PC-3 (cell line): ENCODE measurements at regions of chr6 and their contacts with region 1.

Region 1: GRCh38 chr6:43013843-43014433 is at the starts of genes KLHDC3 and MEA1:
- DNase-seq: peak; percentile 99
- ATAC-seq: peak; percentile 92
- H3K4me3 ChIP-seq: peak within 1 kb of the TSS; percentile 91
- H3K27ac ChIP-seq: peak within 1 kb of the TSS; percentile 17; the same call in 1 of the 2 replicates
- H3K4me1 ChIP-seq: peaks cover 23% of the 10 kb centered on the region
- H3K27me3 ChIP-seq: no peaks in the 10 kb centered on the region
- CTCF ChIP-seq: no peak
- total RNA-seq, gene KLHDC3: 68.9 and 76.0 TPM in 2 replicates
- total RNA-seq, gene MEA1: 131 and 146 TPM in 2 replicates

Region 2: GRCh38 chr6:42901536-42901957 is 112.4 kb before region 1 on chr6:
- CTCF ChIA-PET with region 1: no interaction called
- POLR2A ChIA-PET with region 1: no interaction called
- intact Hi-C with region 1: loop called (anchors 1 kb)
- DNase-seq: peak; percentile 96
- ATAC-seq: peak; percentile 96
- H3K4me3 ChIP-seq: peak overlapping the region; percentile 55
- H3K27ac ChIP-seq: no peak overlapping the region
- H3K4me1 ChIP-seq: peaks cover 16% of the 10 kb centered on the region
- H3K27me3 ChIP-seq: no peaks in the 10 kb centered on the region
- CTCF ChIP-seq: peak; percentile 89

Region 3: DNA sequence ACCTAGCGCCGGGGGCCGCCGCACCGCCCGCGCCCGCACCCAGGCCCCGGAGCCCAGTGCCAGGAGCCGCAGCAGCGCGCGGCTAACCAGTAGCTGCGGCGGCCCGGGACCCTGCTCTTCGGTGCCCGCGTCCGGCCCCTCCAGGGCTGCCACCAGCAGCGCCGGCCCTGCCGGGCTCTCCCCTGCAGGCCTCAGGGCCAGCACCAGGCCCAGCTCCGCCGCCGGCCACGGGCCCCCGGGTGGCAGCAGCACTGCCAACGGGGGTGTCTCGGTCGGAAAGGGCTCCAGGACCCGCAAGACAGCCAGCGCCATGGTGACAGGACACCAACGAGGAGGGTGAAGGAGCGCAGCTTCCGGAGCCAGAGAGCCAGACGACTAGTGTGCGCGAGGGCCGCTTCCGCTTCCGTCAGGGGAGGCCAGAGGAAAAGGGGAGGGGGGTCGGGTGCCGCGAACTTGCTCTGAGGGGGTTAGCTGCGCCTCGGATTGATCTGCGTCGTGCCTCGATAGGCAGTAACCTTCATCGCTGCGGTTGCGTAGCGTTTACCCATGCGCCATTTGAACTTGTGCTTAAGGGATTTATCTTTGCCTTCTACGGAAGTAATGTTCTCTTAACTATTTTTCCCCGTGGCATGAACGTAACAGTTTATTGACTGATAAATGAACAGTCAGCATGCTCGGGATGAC is 35.0 kb before region 1 on chr6 and contains the start of gene PEX6:
- CTCF ChIA-PET with region 1: no interaction called
- POLR2A ChIA-PET with region 1: interaction called, 11 read pairs
- intact Hi-C with region 1: loop called (anchors 2 kb)
- DNase-seq: peak; percentile 89
- ATAC-seq: peak; percentile 85
- H3K4me3 ChIP-seq: peak within 1 kb of the TSS; percentile 93
- H3K27ac ChIP-seq: peak within 1 kb of the TSS; percentile 65
- H3K4me1 ChIP-seq: peaks cover 18% of the 10 kb centered on the region
- H3K27me3 ChIP-seq: no peaks in the 10 kb centered on the region
- CTCF ChIP-seq: no peak
- total RNA-seq, gene PEX6: 35.9 and 40.8 TPM in 2 replicates

Region 4: DNA sequence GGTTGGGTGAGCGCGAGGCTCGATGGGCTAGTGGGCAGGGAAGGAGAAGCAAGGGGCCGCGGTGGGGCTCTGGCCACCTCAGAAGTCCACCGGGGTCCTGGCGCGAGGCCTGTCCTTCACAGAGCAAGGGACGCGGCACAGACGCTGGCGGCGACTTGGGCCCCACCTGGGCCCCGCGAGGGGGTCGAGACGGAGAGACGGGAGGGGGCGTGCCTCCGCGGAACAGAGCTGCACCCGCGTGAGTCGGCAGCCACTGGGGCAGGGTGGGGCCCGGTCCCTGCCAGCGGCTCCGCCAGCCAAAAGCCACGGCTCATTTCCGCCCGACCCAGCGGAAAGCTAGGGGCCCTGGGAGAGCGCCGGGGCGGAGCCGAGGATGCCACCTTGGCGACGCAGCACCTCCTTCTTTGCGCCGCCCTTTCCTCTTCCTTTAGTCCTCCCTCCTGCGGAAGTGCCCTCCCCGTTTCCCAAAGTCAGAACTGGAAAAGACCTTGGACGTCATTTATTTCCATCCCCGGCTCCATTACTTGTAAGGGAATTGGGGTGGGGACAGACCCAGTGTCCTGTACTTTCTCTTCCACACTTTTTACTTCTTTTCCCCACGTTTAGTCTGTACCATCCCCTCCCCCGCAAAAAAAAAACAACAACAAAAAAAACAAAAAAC is 39.7 kb after region 1 on chr6 and contains the start of gene CUL7:
- CTCF ChIA-PET with region 1: no interaction called
- POLR2A ChIA-PET with region 1: interaction called, 15 read pairs
- intact Hi-C with region 1: no loop called
- DNase-seq: peak; percentile 98
- ATAC-seq: peak; percentile 98
- H3K4me3 ChIP-seq: peak within 1 kb of the TSS; percentile 74
- H3K27ac ChIP-seq: peak within 1 kb of the TSS; percentile 69
- H3K4me1 ChIP-seq: peaks cover 28% of the 10 kb centered on the region
- H3K27me3 ChIP-seq: no peaks in the 10 kb centered on the region
- CTCF ChIP-seq: no peak
- total RNA-seq, gene CUL7: 17.5 and 18.6 TPM in 2 replicates

Region 5: GRCh38 chr6:43308101-43308989 is 294.4 kb after region 1 on chr6 and contains the start of gene CRIP3:
- CTCF ChIA-PET with region 1: no interaction called
- POLR2A ChIA-PET with region 1: interaction called, 15 read pairs
- intact Hi-C with region 1: no loop called
- DNase-seq: peak; percentile 64
- ATAC-seq: peak; percentile 78
- H3K4me3 ChIP-seq: peak within 1 kb of the TSS; percentile 69
- H3K27ac ChIP-seq: no peak within 1 kb of the TSS
- H3K4me1 ChIP-seq: peaks cover 10% of the 10 kb centered on the region; the same call in 1 of the 2 replicates
- H3K27me3 ChIP-seq: no peaks in the 10 kb centered on the region
- CTCF ChIP-seq: peak; percentile 53
- total RNA-seq, gene CRIP3: 0.29 TPM in 2 replicates